Ovary (tissue), 10 donors: ENCODE measurements at regions of chrX and their contacts with region 1.

Region 1: GRCh38 chrX:2608638-2609430 is 82.3 kb upstream of the CD99 start:
- DNase-seq: peak; percentile 81 to 88 (median 85)
- H3K4me3 ChIP-seq: peak overlapping the region; percentile 60
- H3K27ac ChIP-seq: peak overlapping the region; percentile 27 to 63
- H3K4me1 ChIP-seq: no peaks in the 10 kb centered on the region
- H3K27me3 ChIP-seq: no peaks in the 10 kb centered on the region
- CTCF ChIP-seq: no peak
- EP300 ChIP-seq: no peak
- POLR2A ChIP-seq: no peak

Region 2: DNA sequence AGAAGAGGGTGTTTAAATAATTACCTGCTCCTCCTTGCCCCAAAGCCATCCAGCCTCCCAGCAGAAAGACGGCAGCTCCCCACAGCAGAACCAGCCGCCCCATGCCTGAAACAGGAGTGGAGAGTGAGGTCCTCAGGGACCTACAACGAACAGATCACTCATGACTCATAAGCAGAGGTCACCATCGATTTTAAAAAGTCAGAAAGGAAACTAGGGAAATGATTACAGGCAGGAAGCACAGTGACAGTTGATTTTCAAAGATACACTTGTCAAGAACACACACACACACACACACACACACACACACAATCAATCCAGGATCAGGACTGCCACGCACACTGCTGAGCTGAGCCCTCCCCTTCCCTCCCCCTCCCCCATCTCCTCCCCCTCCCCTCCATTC is 1396.3 kb before region 1 on chrX and contains the start of gene CRLF2:
- intact Hi-C with region 1: no loop called
- DNase-seq: no peak
- H3K4me3 ChIP-seq: no peak within 1 kb of the TSS
- H3K27ac ChIP-seq: no peak within 1 kb of the TSS
- H3K4me1 ChIP-seq: no peaks in the 10 kb centered on the region
- H3K27me3 ChIP-seq: no peaks in the 10 kb centered on the region
- CTCF ChIP-seq: no peak
- EP300 ChIP-seq: no peak
- POLR2A ChIP-seq: no peak
- total RNA-seq, gene CRLF2: not detected

Region 3: GRCh38 chrX:1468250-1468772 is 1140.5 kb before region 1 on chrX:
- intact Hi-C with region 1: loop called in 1 of 4 experiments (anchors 10 kb)
- DNase-seq: no peak
- H3K4me3 ChIP-seq: no peak overlapping the region
- H3K27ac ChIP-seq: no peak overlapping the region
- H3K4me1 ChIP-seq: no peaks in the 10 kb centered on the region
- H3K27me3 ChIP-seq: no peaks in the 10 kb centered on the region
- CTCF ChIP-seq: no peak
- EP300 ChIP-seq: no peak
- POLR2A ChIP-seq: no peak

Region 4: GRCh38 chrX:1591102-1591900 is 1017.5 kb before region 1 on chrX and contains the start of gene AKAP17A:
- intact Hi-C with region 1: loop called in 1 of 4 experiments (anchors 10 kb)
- DNase-seq: peak; percentile 95 to 99 (median 97)
- H3K4me3 ChIP-seq: peak within 1 kb of the TSS; percentile 72
- H3K27ac ChIP-seq: peak within 1 kb of the TSS; percentile 72 to 86
- H3K4me1 ChIP-seq: peaks cover 10% of the 10 kb centered on the region
- H3K27me3 ChIP-seq: no peaks in the 10 kb centered on the region
- CTCF ChIP-seq: peak in 1 of 3 donors; percentile 33
- EP300 ChIP-seq: no peak
- POLR2A ChIP-seq: peak; percentile 72
- total RNA-seq, gene AKAP17A: 51.7 to 76.7 (median 63.3) TPM

Region 5: GRCh38 chrX:2548711-2549423 is 60.0 kb before region 1 on chrX:
- intact Hi-C with region 1: no loop called
- DNase-seq: no peak
- H3K4me3 ChIP-seq: no peak overlapping the region
- H3K27ac ChIP-seq: no peak overlapping the region
- H3K4me1 ChIP-seq: no peaks in the 10 kb centered on the region
- H3K27me3 ChIP-seq: no peaks in the 10 kb centered on the region
- CTCF ChIP-seq: no peak
- EP300 ChIP-seq: no peak
- POLR2A ChIP-seq: no peak